ENCODE measurements at regions of chr22 and their contacts with region 1.

Region 1: DNA sequence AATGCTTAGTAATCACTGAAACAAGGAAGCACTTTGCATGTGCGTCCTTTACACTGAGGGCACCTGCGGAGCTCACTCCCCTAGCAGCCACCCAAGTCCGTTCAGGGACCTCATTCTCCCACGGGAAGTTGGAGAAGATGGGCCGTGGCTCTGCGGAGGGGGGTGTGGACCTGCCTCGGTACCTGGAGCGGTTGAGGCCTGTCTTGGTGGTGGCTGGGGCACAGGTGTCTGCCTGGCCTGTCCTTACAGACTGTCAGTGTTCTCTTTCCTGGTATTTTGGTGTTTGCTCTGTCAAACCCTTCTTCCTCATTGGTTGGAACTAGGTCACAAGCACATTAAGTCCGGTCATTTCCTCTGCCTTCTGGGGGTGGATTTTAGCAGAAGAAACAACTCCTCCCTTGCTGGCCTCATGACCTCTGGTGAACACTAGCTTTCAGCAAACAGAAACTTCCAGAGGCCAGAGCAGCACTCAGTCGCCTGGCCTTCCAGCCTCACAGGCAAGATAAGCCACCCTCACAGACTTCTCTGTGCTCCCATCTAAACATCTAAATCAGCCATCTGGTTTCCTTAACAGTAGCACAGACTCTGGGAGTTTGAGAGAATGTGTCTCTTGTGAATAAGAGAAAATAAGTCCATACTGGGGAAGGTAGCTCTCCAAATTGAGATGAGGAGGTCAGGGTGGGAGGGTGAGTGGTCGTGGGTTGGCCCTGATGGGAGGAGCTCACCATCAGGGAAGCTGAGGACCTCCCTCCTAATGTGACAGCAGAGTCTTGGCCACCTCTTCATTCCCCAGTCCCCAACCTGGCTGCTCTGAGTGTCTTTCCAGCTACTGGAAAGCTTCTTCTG is 8.6 kb downstream of the SNAP29 start:
- H3K4me3 Mint-ChIP-seq: peak overlapping the region; percentile 48
- H3K27ac Mint-ChIP-seq: peak overlapping the region; percentile 84
- H3K4me1 Mint-ChIP-seq: peaks cover 64% of the 10 kb centered on the region
- H3K27me3 Mint-ChIP-seq: no peaks in the 10 kb centered on the region

Region 2: GRCh38 chr22:20803696-20804324 is 63.6 kb before region 1 on chr22:
- intact Hi-C with region 1: loop called (anchors 10 kb)
- H3K4me3 Mint-ChIP-seq: no peak overlapping the region
- H3K27ac Mint-ChIP-seq: no peak overlapping the region
- H3K4me1 Mint-ChIP-seq: no peaks in the 10 kb centered on the region
- H3K27me3 Mint-ChIP-seq: no peaks in the 10 kb centered on the region

Region 3: GRCh38 chr22:20840646-20841371 is 26.6 kb before region 1 on chr22:
- intact Hi-C with region 1: no loop called
- H3K4me3 Mint-ChIP-seq: no peak overlapping the region
- H3K27ac Mint-ChIP-seq: no peak overlapping the region
- H3K4me1 Mint-ChIP-seq: peaks cover 29% of the 10 kb centered on the region
- H3K27me3 Mint-ChIP-seq: no peaks in the 10 kb centered on the region

Region 4: DNA sequence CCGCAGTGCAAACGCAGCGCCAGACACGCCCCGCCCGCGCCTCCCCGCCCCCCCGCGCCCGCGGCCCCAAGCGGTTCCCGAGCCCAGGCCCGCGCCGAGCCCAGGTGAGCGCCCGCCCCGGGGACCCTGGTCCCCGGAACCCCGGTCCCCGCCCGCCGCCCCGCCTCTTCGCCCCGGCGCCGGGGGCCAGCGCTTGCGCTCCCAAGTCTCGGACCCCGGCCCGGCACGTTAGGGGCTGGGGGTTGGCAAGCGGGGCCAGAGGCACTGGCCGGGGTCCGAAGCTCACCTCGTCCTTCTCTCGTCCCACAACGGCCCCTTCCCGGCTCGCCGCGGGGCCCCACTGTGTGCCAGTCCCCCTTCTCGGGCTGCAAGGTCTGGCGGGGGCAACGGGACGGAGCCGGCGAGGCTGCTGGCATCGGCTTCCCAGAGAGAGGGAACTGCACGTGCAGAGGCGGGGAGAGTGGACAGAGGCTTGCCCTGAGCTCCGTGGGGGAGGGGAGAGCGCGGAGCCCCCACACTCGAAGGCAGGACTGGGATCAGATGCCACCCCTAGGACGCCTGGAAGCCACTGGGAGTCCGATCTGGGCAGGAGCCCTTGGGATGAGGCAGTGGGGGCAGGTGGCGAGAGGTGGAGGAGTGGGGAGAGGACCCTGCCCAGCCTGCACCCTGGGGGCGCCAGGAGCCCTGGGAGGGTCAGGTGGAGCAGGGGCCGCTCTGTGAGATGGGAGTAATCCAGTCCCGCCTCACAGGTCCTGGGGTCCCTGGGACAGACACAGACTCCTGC is 97.9 kb after region 1 on chr22:
- intact Hi-C with region 1: no loop called
- H3K4me3 Mint-ChIP-seq: peak overlapping the region; percentile 68
- H3K27ac Mint-ChIP-seq: peak overlapping the region; percentile 11
- H3K4me1 Mint-ChIP-seq: peaks cover 59% of the 10 kb centered on the region
- H3K27me3 Mint-ChIP-seq: peaks cover 26% of the 10 kb centered on the region

Region 5: GRCh38 chr22:21014726-21015465 is 147.5 kb after region 1 on chr22 and contains the start of gene P2RX6:
- intact Hi-C with region 1: no loop called
- H3K4me3 Mint-ChIP-seq: peak within 1 kb of the TSS; percentile 71
- H3K27ac Mint-ChIP-seq: peak within 1 kb of the TSS; percentile 81
- H3K4me1 Mint-ChIP-seq: peaks cover 18% of the 10 kb centered on the region
- H3K27me3 Mint-ChIP-seq: peaks cover 46% of the 10 kb centered on the region